ENCODE measurements at regions of chr3 and their contacts with region 1.

Region 1: DNA sequence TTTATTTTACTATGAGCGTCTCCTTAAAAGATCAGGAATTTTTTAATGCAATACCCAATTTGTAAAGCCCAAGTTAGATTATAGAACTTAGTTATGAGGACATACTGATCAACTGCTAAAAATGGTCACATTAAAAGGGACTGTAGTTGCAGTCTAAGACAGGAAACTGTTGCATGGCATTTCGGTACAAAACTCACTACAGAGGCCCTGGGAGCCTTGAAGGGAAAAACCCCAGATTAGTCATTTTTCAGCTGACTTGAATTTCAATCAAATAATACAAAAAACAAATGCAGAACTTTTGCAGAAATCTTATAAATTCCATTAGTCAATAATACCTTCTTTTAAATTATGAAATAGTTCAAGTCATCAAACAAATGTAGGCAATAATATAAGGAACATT is 6.9 kb upstream of the PTX3 start:
- DNase-seq: peak; percentile 65 to 85 (median 83)
- H3K4me3 ChIP-seq: no peak overlapping the region
- H3K4me3 Mint-ChIP-seq: no peak overlapping the region
- H3K27ac ChIP-seq: no peak overlapping the region
- H3K27ac Mint-ChIP-seq: peak overlapping the region in 5 of 7 donors; percentile 36 to 82 (median 64)
- H3K4me1 ChIP-seq: peaks cover 14 to 28% of the 10 kb centered on the region in 2 donors
- H3K4me1 Mint-ChIP-seq: peaks cover 22% of the 10 kb centered on the region
- H3K27me3 ChIP-seq: no peaks in the 10 kb centered on the region
- H3K27me3 Mint-ChIP-seq: peaks cover 0 to 4% (median 0%) of the 10 kb centered on the region in 3 donors
- CTCF ChIP-seq: no peak

Region 2: GRCh38 chr3:157467200-157467599 is 37.5 kb after region 1 on chr3:
- intact Hi-C with region 1: loop called in 1 of 2 experiments (anchors 5 kb)
- DNase-seq: no peak
- H3K4me3 ChIP-seq: peak overlapping the region in 1 of 3 experiments; percentile 1
- H3K4me3 Mint-ChIP-seq: no peak overlapping the region
- H3K27ac ChIP-seq: peak overlapping the region in 1 of 2 donors; percentile 78
- H3K27ac Mint-ChIP-seq: peak overlapping the region in 5 of 7 donors; percentile 72 to 88 (median 78)
- H3K4me1 ChIP-seq: peaks cover 26 to 39% of the 10 kb centered on the region in 2 donors
- H3K4me1 Mint-ChIP-seq: peaks cover 38% of the 10 kb centered on the region
- H3K27me3 ChIP-seq: no peaks in the 10 kb centered on the region
- H3K27me3 Mint-ChIP-seq: no peaks in the 10 kb centered on the region
- CTCF ChIP-seq: no peak

Measured in CD14-positive monocyte (primary cell).